T-cell (primary cell): ENCODE measurements at regions of chr11 and their contacts with region 1.

Region 1: DNA sequence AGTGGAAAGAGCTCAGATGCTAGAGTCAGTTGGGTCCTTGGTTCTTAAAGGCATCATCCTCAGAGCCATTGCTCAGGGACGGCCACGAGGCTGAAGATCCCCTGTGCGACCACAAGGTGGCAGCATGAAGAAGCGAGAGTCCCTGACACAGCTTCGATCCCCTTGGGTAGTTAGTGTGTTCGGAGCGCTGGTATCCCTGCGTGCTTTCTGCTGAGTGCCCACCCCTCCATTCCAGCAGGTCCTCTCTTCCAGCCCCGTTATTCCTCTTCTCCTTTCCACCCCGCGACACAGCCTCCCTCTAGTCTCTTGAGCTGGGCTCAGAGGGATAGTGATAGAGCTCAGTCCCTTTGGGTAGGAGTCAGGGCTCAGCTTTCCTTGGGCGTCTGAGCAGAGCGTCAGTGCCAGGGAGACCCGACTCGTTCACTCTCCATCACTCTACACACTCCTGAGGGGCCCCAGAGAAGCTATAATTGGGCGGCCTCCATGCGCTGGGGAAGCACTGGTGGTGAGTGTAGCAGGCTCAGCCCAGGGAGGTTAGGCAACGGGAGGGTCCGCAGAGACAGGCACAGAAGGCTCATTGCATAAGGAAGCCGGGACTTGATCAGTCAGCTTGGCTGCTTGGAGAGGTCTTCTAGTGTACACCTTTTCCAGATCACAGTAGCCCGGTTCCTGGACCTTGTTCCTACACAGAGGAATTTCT is at the start of gene OR51D1:
- DNase-seq: peak; percentile 23 to 79 (median 55)
- ATAC-seq: peak; percentile 81 to 86 (median 86)
- H3K4me3 ChIP-seq: no peak within 1 kb of the TSS
- H3K4me3 Mint-ChIP-seq: no peak within 1 kb of the TSS
- H3K27ac ChIP-seq: no peak within 1 kb of the TSS
- H3K27ac Mint-ChIP-seq: no peak within 1 kb of the TSS
- H3K4me1 ChIP-seq: peaks cover 0 to 6% of the 10 kb centered on the region in 2 experiments
- H3K4me1 Mint-ChIP-seq: no peaks in the 10 kb centered on the region
- H3K27me3 ChIP-seq: peaks cover 0 to 15% of the 10 kb centered on the region in 2 experiments
- H3K27me3 Mint-ChIP-seq: peaks cover 2 to 12% of the 10 kb centered on the region in 2 donors
- total RNA-seq, gene OR51D1: not detected

Region 2: GRCh38 chr11:4076774-4077173 is 560.3 kb before region 1 on chr11:
- CTCF ChIA-PET with region 1: no interaction called
- POLR2A ChIA-PET with region 1: no interaction called
- DNase-seq: no peak
- ATAC-seq: no peak
- H3K4me3 ChIP-seq: no peak overlapping the region
- H3K4me3 Mint-ChIP-seq: no peak overlapping the region
- H3K27ac ChIP-seq: no peak overlapping the region
- H3K27ac Mint-ChIP-seq: peak overlapping the region; percentile 39 to 44
- H3K4me1 ChIP-seq: peaks cover 7 to 9% of the 10 kb centered on the region in 2 experiments
- H3K4me1 Mint-ChIP-seq: peaks cover 31 to 47% (median 33%) of the 10 kb centered on the region in 3 donors
- H3K27me3 ChIP-seq: no peaks in the 10 kb centered on the region
- H3K27me3 Mint-ChIP-seq: no peaks in the 10 kb centered on the region

Region 3: DNA sequence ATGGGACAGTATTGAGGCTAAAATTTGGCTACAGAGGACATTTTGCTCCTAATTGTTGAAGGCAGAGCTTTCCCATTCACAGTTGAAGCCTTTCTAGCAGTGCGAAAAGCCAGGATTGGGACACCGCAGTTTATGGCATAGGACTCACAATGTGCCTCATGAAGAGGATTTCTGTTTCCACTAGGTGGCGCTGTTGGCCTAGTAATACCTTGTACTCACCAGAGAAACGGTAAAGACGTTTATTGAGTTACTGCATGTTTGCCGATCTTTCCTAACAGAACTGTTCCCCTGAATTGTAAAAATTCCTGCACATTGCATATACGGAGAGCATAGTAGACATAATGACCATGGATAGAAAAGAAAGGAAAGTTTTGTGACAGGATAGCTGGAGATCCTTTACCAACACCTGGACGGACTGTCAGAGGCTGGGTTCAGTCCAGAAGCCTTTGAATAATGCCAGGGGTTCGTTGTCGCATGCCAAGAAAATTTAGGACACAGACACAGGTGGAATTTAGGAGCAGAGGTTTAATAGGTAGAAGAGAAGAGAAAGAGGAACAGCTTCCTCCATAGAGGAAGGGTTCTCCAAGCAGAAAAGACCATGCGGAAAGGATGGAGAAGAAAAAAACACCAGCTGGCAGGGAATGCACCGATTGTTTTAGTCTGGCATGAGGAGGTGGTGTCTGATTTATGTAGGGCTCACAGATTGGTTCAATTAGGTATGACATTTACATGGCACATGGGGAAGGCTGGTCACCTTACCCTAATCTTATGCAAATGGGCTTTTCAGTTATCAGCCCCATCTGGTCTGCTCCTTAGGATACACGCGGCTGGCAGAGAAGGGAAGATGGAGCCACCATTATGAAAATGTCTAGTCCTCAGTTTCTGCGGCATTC is 10.7 kb before region 1 on chr11:
- CTCF ChIA-PET with region 1: interaction called, 7 to 13 read pairs
- POLR2A ChIA-PET with region 1: no interaction called
- DNase-seq: peak in 21 of 35 experiments; percentile 5 to 57 (median 17)
- ATAC-seq: no peak
- H3K4me3 ChIP-seq: no peak overlapping the region
- H3K4me3 Mint-ChIP-seq: no peak overlapping the region
- H3K27ac ChIP-seq: no peak overlapping the region
- H3K27ac Mint-ChIP-seq: no peak overlapping the region
- H3K4me1 ChIP-seq: no peaks in the 10 kb centered on the region
- H3K4me1 Mint-ChIP-seq: no peaks in the 10 kb centered on the region
- H3K27me3 ChIP-seq: peaks cover 0 to 4% of the 10 kb centered on the region in 2 experiments
- H3K27me3 Mint-ChIP-seq: peaks cover 39 to 46% of the 10 kb centered on the region in 2 donors

Region 4: GRCh38 chr11:5891216-5891800 is 1254.2 kb after region 1 on chr11:
- CTCF ChIA-PET with region 1: interaction called in 1 of 2 experiments, 13 read pairs
- POLR2A ChIA-PET with region 1: no interaction called
- DNase-seq: peak in 1 of 35 experiments; percentile 12
- ATAC-seq: no peak
- H3K4me3 ChIP-seq: no peak overlapping the region
- H3K4me3 Mint-ChIP-seq: no peak overlapping the region
- H3K27ac ChIP-seq: no peak overlapping the region
- H3K27ac Mint-ChIP-seq: no peak overlapping the region
- H3K4me1 ChIP-seq: no peaks in the 10 kb centered on the region
- H3K4me1 Mint-ChIP-seq: no peaks in the 10 kb centered on the region
- H3K27me3 ChIP-seq: peaks cover 0 to 2% of the 10 kb centered on the region in 2 experiments
- H3K27me3 Mint-ChIP-seq: peaks cover 11 to 12% of the 10 kb centered on the region in 2 donors